ENCODE measurements at regions of chrX and their contacts with region 1.

Region 1: DNA sequence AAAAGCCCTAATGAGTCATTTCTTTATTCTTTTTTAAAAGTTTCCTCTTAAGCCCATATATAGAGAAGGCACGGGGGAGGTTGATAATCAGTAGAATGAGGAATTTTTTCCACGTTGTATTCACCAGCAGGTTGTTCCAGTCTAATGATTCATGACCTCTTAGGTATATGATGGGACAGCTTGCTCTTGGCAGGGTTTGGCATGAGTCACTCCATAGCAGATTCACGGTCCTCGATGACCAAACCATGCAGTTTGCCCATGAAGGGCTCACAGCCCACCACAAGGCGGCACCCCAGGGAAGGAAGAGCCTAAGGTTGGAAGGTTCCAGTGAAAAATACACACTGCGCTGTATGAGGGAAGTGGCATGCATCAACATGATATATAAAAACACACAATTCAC is 623.8 kb upstream of the DIPK2B start:
- DNase-seq: peak; percentile 92
- H3K4me3 ChIP-seq: no peak overlapping the region
- H3K27ac ChIP-seq: peak overlapping the region; percentile 29
- H3K4me1 ChIP-seq: peaks cover 7% of the 10 kb centered on the region
- H3K27me3 ChIP-seq: no peaks in the 10 kb centered on the region
- CTCF ChIP-seq: peak; percentile 63 to 80
- POLR2A ChIP-seq: no peak

Region 2: DNA sequence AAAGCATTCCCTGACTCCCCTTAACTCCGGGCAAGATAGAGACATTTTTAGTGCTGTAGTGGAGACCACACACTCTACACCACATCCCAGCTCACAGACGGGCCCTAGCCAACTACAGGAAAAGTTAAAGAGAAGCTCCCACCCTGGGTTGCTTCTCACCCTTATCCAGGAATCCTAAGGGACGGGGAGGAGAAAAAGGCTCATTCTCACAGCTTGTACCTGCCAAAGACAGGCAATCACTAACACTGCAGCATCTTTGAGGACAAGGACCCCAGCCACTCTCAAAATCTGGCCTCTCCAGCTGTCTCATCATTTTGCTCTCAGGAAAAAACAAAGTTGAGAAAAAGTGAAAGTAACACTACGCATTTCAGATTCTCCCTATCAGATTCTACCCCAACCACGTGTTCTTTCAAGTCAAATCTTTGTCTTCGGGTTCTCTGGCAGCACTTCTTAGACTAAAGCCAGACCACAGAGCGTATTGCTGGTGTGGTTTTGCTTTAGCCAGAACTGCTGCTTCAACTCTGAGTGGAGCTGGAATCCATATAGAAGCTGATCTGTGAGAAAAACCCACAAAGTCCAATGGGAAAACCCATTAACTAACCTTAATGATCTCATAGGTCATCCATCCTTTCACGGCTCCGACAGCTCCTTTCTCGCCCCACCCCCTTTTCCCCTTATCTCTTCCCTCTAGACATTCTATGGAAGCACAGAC is 17.9 kb before region 1 on chrX:
- CTCF ChIA-PET with region 1: interaction called, 10 read pairs
- POLR2A ChIA-PET with region 1: interaction called, 3 read pairs
- dilution Hi-C with region 1: no loop called
- intact Hi-C with region 1: loop called (anchors 2 kb)
- DNase-seq: peak; percentile 71
- H3K4me3 ChIP-seq: peak overlapping the region in 2 of 3 experiments; percentile 21 to 65
- H3K27ac ChIP-seq: peak overlapping the region; percentile 97
- H3K4me1 ChIP-seq: peaks cover 47% of the 10 kb centered on the region
- H3K27me3 ChIP-seq: no peaks in the 10 kb centered on the region
- CTCF ChIP-seq: no peak
- POLR2A ChIP-seq: no peak

Region 3: DNA sequence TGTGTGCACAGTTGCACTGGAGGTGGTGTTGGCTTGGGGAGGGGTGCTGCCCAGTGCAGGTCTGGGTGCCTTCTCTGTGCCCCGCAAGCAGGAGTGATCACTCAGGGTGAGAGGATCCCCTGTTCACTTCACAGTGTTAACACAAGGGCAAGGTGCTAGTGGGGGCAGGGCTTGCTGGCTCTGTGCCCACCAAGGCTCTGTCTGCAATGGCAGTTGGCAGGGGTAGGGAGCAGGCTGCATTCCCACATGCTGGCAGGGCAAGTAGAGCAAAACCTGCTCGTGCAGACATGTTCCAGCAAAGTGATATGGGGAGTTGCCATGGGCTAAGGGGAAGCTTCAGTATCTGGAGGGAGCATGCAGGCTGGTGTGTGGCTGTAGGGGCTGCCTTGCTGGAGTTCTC is 292.8 kb after region 1 on chrX:
- CTCF ChIA-PET with region 1: no interaction called
- POLR2A ChIA-PET with region 1: no interaction called
- dilution Hi-C with region 1: no loop called
- intact Hi-C with region 1: loop called (anchors 10 kb)
- DNase-seq: no peak
- H3K4me3 ChIP-seq: no peak overlapping the region
- H3K27ac ChIP-seq: no peak overlapping the region
- H3K4me1 ChIP-seq: no peaks in the 10 kb centered on the region
- H3K27me3 ChIP-seq: no peaks in the 10 kb centered on the region
- CTCF ChIP-seq: no peak
- POLR2A ChIP-seq: no peak

Region 4: GRCh38 chrX:46354481-46354880 is 530.0 kb after region 1 on chrX:
- CTCF ChIA-PET with region 1: no interaction called
- POLR2A ChIA-PET with region 1: no interaction called
- dilution Hi-C with region 1: no loop called
- intact Hi-C with region 1: no loop called
- DNase-seq: no peak
- H3K4me3 ChIP-seq: no peak overlapping the region
- H3K27ac ChIP-seq: no peak overlapping the region
- H3K4me1 ChIP-seq: no peaks in the 10 kb centered on the region
- H3K27me3 ChIP-seq: no peaks in the 10 kb centered on the region
- CTCF ChIP-seq: no peak
- POLR2A ChIP-seq: no peak

Region 5: DNA sequence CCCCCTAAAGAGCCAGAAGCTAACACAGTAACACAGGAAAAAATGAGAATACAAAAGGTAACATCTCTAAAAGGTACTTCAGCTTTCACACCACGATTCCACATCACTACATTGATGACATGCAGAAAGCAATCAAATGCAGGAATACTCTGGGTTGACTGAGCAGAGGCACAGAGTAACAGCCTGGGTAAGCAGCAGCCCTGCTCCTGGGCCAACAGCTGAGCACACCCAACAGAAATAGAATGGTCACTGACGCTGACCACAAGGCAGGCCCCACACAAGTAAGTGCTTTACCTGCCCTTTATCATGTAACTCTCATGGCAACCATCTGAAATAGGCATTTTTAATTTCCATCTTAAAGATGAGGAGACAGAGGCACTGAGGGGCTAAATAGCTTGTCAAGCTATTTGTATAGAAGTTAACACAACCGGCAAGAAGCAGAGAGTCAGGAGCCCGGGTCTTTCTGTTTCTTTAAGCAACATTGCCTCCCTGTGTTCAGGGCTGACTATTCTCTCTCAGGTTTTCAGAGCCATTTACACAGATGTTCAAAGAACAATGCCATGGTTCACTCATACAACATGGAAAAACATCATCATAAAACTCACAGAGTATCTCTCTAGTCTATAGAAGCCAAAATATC is 551.9 kb after region 1 on chrX:
- CTCF ChIA-PET with region 1: interaction called, 55 read pairs
- POLR2A ChIA-PET with region 1: no interaction called
- dilution Hi-C with region 1: no loop called
- intact Hi-C with region 1: loop called (anchors 1 kb)
- DNase-seq: peak; percentile 80
- H3K4me3 ChIP-seq: no peak overlapping the region
- H3K27ac ChIP-seq: no peak overlapping the region
- H3K4me1 ChIP-seq: peaks cover 4% of the 10 kb centered on the region
- H3K27me3 ChIP-seq: no peaks in the 10 kb centered on the region
- CTCF ChIP-seq: peak; percentile 21 to 32
- POLR2A ChIP-seq: no peak

Region 6: GRCh38 chrX:46408553-46409407 is 584.3 kb after region 1 on chrX:
- CTCF ChIA-PET with region 1: interaction called, 22 read pairs
- POLR2A ChIA-PET with region 1: no interaction called
- dilution Hi-C with region 1: no loop called
- intact Hi-C with region 1: loop called (anchors 1 kb)
- DNase-seq: peak; percentile 74
- H3K4me3 ChIP-seq: no peak overlapping the region
- H3K27ac ChIP-seq: no peak overlapping the region
- H3K4me1 ChIP-seq: no peaks in the 10 kb centered on the region
- H3K27me3 ChIP-seq: no peaks in the 10 kb centered on the region
- CTCF ChIP-seq: peak; percentile 51 to 52
- POLR2A ChIP-seq: no peak

Region 7: GRCh38 chrX:46713672-46714490 is 889.4 kb after region 1 on chrX:
- CTCF ChIA-PET with region 1: no interaction called
- POLR2A ChIA-PET with region 1: no interaction called
- dilution Hi-C with region 1: no loop called
- intact Hi-C with region 1: no loop called
- DNase-seq: no peak
- H3K4me3 ChIP-seq: no peak overlapping the region
- H3K27ac ChIP-seq: no peak overlapping the region
- H3K4me1 ChIP-seq: no peaks in the 10 kb centered on the region
- H3K27me3 ChIP-seq: no peaks in the 10 kb centered on the region
- CTCF ChIP-seq: no peak
- POLR2A ChIP-seq: no peak